ENCODE measurements at regions of chr2 and their contacts with region 1.

Region 1: DNA sequence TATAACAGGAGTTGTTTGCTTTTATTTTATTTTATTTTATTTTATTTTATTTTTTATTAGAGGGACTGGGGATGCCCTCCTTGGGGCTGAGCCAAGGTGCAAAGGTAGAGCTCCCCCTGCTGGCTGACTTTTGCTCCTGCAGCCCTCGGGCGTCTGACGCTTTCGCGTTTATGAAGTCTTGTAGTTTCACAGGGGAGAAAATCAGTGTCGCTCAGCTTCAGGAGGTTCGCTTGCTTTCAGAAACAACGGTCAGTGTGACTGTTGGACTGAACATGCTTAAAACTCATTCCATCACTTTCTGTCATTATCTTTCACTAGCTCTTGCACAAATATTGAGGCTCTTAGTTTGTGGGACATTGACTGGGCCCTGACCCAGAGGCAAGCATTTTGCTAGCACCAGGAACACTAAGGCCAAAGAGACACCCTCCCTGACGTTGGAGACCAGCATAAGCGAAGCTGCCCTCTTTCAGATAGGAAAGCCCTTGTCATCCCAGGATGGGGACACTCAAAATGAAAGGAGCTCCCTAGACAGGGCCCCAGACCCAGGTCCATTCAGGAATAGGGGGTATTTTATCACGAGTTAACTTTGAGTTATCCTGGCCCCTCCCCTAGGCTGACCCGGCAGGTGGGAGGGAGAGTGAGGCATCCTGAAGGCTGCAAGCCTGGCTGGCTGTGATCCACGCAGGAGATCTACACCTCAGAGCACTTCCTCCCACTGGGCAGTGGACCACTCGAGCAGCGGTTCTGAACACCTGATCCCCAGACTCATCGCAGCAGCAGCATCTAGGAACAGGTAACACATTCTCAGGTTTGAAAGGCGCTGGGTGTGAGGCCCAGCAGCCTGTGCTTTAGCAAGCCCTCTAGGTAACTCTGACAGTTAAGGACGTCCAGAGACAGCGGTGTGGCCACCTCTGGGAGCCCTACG is 34.4 kb downstream of the LGALSL start:
- DNase-seq: peak; percentile 89
- ATAC-seq: peak; percentile 87
- H3K4me3 Mint-ChIP-seq: no peak overlapping the region
- H3K27ac Mint-ChIP-seq: no peak overlapping the region
- H3K4me1 Mint-ChIP-seq: peaks cover 8% of the 10 kb centered on the region
- H3K27me3 Mint-ChIP-seq: no peaks in the 10 kb centered on the region

Region 2: DNA sequence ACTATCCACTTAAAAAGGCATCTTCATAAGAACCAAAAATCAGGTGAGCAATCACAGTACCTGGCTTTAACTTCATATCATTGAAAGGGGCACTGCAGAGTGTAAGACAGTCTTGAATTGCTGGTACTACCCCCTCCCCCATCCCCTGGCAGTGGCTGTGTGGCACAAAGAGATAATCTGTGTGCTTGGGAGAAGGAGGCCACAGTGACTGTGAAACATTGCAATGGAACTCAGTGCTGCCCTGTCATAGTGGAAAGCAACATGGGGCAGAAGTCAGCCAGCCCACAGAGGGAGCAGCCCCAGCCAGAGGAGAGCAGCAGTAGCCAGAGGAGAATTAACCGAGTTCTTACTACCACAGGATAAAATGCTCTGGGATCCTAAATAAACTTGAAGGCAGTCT is 691.9 kb before region 1 on chr2:
- CTCF ChIA-PET with region 1: no interaction called
- POLR2A ChIA-PET with region 1: no interaction called
- intact Hi-C with region 1: no loop called
- DNase-seq: no peak
- ATAC-seq: no peak
- H3K4me3 Mint-ChIP-seq: no peak overlapping the region
- H3K27ac Mint-ChIP-seq: no peak overlapping the region
- H3K4me1 Mint-ChIP-seq: peaks cover 7% of the 10 kb centered on the region
- H3K27me3 Mint-ChIP-seq: no peaks in the 10 kb centered on the region

Region 3: DNA sequence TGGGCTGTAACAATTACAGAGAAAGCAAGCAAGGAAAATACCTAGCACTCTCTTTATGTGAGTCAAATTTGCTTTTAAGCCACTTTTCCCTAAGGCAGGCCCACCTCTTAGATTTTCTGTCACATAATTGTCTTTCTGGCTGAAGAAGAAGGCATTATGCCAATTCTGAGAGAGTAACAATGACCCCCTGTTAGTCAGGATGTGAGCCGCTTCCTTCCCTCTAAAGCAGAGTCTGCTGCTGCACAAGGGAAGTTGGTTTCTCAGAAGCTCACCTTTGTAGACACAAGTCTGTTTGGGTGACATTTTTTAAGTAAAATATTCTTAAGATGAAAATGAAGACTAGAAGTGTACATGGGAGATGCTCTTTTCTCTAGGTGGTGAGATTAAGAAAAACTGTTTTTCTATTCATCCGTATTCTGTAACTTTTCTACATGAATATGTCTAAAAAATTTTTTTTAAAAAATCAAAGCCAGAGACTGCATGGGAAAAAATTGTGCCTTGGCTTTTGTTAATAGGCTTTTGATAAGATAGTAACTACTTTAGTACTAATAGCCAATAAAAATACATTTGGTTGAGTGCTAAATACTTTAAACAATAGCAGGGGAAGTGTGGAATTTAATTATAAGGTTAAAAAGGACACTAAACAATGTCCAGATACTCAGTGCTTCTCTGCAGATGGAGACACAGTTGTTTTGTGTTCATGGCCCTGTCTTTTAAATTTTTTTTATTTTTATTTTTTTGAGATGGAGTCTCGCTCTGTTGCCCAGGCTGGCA is 435.7 kb before region 1 on chr2:
- CTCF ChIA-PET with region 1: interaction called, 9 read pairs
- POLR2A ChIA-PET with region 1: no interaction called
- intact Hi-C with region 1: loop called (anchors 1 kb)
- DNase-seq: no peak
- ATAC-seq: no peak
- H3K4me3 Mint-ChIP-seq: no peak overlapping the region
- H3K27ac Mint-ChIP-seq: no peak overlapping the region
- H3K4me1 Mint-ChIP-seq: peaks cover 40% of the 10 kb centered on the region
- H3K27me3 Mint-ChIP-seq: no peaks in the 10 kb centered on the region

Region 4: GRCh38 chr2:64453770-64454385 is 34.4 kb before region 1 on chr2 and contains the start of gene LGALSL:
- CTCF ChIA-PET with region 1: interaction called, 21 read pairs
- POLR2A ChIA-PET with region 1: no interaction called
- intact Hi-C with region 1: no loop called
- DNase-seq: peak; percentile 68
- ATAC-seq: peak; percentile 77
- H3K4me3 Mint-ChIP-seq: peak within 1 kb of the TSS; percentile 76
- H3K27ac Mint-ChIP-seq: peak within 1 kb of the TSS; percentile 62
- H3K4me1 Mint-ChIP-seq: peaks cover 5% of the 10 kb centered on the region
- H3K27me3 Mint-ChIP-seq: peaks cover 19% of the 10 kb centered on the region
- total RNA-seq, gene LGALSL: 1.9 to 2.2 TPM

Region 5: DNA sequence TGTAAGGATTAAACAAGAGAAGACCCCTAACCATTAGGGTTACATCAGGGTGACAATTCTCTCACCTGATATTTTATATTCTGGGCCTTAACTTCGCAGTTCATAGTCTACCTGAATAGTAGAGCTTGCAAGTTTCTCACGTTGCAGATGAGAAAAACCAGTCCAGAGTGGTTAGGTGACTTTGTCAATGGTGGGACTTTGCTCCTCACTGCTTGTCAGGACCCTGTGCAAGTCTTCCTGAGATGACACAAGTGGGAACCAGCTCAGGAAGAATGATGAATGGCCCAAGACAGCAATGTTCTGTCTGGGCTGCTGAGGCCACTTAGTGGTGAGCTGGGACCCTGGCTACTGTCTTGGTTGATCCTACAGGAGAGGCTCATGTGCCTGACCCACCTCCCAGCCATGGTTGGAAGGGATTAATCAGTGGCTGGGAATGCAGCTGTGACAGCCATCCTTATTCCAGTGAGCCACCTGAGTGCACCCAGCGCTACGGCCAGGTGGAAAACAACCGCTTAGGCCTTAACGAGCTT is 17.5 kb before region 1 on chr2:
- CTCF ChIA-PET with region 1: interaction called, 13 read pairs
- POLR2A ChIA-PET with region 1: no interaction called
- intact Hi-C with region 1: no loop called
- DNase-seq: no peak
- ATAC-seq: no peak
- H3K4me3 Mint-ChIP-seq: no peak overlapping the region
- H3K27ac Mint-ChIP-seq: no peak overlapping the region
- H3K4me1 Mint-ChIP-seq: no peaks in the 10 kb centered on the region
- H3K27me3 Mint-ChIP-seq: peaks cover 2% of the 10 kb centered on the region

Region 6: DNA sequence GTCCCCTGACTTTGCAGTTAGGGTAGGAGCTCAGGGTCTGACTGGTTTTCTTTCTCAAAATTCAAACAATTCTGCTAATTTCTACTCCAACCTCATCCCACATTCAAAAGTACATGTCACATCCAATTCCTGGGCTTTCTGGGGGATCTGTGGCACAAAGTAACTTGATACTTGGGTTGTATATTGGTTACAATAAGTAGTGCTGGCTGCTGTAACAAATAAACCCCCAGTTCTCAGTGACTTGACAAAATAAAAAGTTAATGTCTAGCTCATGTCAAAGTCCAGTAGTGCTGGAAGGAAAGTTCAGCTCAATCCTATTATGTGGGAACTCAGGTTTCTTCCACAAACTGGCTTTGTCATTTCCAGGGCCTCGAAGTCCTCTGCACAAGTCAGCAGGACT is 11.3 kb before region 1 on chr2:
- CTCF ChIA-PET with region 1: interaction called, 15 read pairs
- POLR2A ChIA-PET with region 1: no interaction called
- intact Hi-C with region 1: no loop called
- DNase-seq: no peak
- ATAC-seq: no peak
- H3K4me3 Mint-ChIP-seq: no peak overlapping the region
- H3K27ac Mint-ChIP-seq: no peak overlapping the region
- H3K4me1 Mint-ChIP-seq: peaks cover 12% of the 10 kb centered on the region
- H3K27me3 Mint-ChIP-seq: peaks cover 2% of the 10 kb centered on the region

Region 7: DNA sequence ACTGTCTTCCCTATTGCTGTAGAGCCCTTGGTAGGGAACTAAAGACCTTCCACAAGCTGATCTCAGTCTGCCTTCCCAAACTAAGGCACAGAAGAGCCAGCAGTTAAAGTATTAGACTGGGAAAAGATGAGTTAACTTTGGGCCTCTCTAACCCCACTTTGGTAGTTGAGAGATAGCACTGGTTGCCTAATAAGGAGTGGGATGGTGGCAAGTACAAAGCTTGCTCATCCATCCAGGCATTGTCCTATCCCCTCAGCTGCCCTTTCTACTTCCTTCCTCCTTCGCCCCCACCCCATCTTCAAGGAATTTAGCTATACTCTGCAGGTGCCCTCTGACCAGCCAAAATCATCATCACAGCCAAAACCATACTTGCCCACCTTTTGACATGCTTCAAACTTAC is 13.6 kb after region 1 on chr2:
- CTCF ChIA-PET with region 1: interaction called, 40 read pairs
- POLR2A ChIA-PET with region 1: no interaction called
- intact Hi-C with region 1: no loop called
- DNase-seq: no peak
- ATAC-seq: no peak
- H3K4me3 Mint-ChIP-seq: no peak overlapping the region
- H3K27ac Mint-ChIP-seq: no peak overlapping the region
- H3K4me1 Mint-ChIP-seq: peaks cover 5% of the 10 kb centered on the region
- H3K27me3 Mint-ChIP-seq: peaks cover 7% of the 10 kb centered on the region

Region 8: DNA sequence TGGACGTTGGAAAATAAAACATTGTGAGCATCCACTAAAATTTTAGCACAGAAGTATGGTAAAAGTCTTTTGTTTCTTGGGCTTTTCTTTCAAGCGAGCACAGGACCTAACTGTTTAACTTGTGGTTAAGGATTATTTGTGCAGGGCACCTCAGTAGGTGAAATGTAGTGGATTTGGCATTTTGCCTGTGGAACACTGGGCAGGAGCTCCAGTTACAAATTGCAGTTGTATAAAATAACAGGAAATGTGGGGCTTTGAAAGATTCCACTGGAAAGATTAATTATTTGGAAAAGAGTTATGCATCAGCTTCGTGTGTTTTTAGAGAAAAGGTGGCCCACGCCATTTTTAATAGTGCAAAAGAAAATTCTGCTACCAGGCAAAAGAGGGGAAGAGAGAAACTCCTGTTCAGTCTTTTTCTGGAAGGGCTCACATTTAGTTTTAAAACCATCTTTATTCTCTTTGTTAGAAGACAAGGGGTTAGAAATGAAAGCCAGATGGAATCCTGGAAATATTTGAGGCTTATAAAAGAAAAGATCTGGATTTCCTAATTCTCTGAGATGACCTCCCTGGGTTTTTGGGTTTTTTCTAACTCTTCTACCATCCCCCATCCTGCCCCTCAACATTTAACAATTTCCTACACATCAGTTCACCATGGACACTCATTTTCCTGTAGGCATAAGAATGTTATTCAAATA is 309.7 kb after region 1 on chr2:
- CTCF ChIA-PET with region 1: no interaction called
- POLR2A ChIA-PET with region 1: no interaction called
- intact Hi-C with region 1: no loop called
- DNase-seq: no peak
- ATAC-seq: no peak
- H3K4me3 Mint-ChIP-seq: no peak overlapping the region
- H3K27ac Mint-ChIP-seq: no peak overlapping the region
- H3K4me1 Mint-ChIP-seq: no peaks in the 10 kb centered on the region
- H3K27me3 Mint-ChIP-seq: peaks cover 2% of the 10 kb centered on the region

Measured in activated CD4-positive, alpha-beta T cell treated with anti-CD3 and anti-CD28 coated beads for 36 hours (primary cell).